Endothelial cell of umbilical vein (primary cell): ENCODE measurements at regions of chr17 and their contacts with region 1.

Region 1: GRCh38 chr17:28773736-28774135 is 29.9 kb downstream of the TRAF4 start:
- DNase-seq: no peak
- H3K4me3 ChIP-seq: no peak overlapping the region
- H3K27ac ChIP-seq: no peak overlapping the region
- H3K4me1 ChIP-seq: peaks cover 4% of the 10 kb centered on the region
- H3K27me3 ChIP-seq: no peaks in the 10 kb centered on the region
- CTCF ChIP-seq: no peak
- POLR2A ChIP-seq: no peak

Region 2: GRCh38 chr17:28612936-28613872 is 160.5 kb before region 1 on chr17:
- CTCF ChIA-PET with region 1: no interaction called
- POLR2A ChIA-PET with region 1: no interaction called
- dilution Hi-C with region 1: no loop called
- intact Hi-C with region 1: no loop called
- DNase-seq: peak; percentile 43
- H3K4me3 ChIP-seq: no peak overlapping the region
- H3K27ac ChIP-seq: no peak overlapping the region
- H3K4me1 ChIP-seq: peaks cover 7% of the 10 kb centered on the region
- H3K27me3 ChIP-seq: no peaks in the 10 kb centered on the region
- CTCF ChIP-seq: peak; percentile 56 to 79
- POLR2A ChIP-seq: peak; percentile 14

Region 3: DNA sequence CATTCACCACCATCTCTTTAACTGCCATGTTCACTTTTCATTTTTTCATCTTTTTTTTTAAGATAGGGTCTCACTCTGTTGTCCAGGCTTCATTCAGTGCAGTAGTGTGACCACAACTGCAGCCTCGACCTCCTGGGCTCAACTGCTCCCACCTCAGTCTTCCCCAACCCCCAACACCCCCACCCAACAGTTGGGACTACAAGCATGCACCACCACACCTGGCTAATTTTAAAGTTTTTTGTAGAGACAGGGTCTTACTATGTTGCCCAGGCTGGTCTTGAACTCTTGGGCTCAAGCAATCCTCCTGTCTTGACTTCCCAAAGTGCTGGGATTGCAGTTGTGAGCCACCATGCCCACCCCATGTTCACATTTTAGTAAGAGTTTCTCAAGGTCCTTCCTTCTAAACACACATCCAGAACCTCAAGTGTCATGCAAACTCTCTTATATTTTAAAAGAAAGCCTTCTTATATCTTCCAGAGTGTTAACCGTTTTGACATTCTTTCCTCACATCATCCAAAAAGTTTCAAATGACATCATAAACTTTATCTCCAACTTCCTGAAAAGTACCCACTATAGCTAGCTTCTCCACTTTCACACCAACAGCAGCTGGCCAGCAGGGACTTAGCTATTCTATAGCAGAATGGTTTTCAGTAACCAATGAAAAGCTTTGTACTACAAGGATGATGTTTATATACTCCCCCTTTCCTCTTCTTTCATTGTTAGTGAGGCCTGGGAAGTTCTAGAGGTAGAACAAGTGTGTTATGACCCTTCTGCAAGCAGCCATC is 19.3 kb after region 1 on chr17:
- CTCF ChIA-PET with region 1: interaction called, 12 read pairs
- POLR2A ChIA-PET with region 1: no interaction called
- dilution Hi-C with region 1: no loop called
- intact Hi-C with region 1: no loop called
- DNase-seq: peak; percentile 22
- H3K4me3 ChIP-seq: no peak overlapping the region
- H3K27ac ChIP-seq: no peak overlapping the region
- H3K4me1 ChIP-seq: peaks cover 3% of the 10 kb centered on the region
- H3K27me3 ChIP-seq: no peaks in the 10 kb centered on the region
- CTCF ChIP-seq: no peak
- POLR2A ChIP-seq: no peak

Region 4: DNA sequence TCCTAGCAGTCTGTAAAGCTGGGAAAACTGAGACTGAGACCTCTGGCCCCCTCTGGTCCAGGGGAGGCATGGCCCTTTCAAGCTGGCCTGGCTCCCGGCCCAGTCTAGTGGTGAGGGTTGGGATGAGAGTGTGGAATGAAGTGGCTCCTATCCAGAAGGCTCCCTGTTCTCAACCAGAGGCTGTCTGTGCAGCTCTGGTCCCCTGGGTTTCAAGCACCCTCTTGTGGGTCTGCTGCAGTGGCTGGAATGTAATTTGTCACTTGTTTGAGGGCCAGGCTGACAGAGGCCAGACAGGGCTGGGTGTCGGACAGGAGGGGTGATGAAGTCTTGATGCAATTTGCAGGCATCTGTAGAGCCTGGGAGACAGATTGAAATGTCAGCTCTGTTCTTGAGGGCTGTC is 199.7 kb after region 1 on chr17:
- CTCF ChIA-PET with region 1: no interaction called
- POLR2A ChIA-PET with region 1: no interaction called
- dilution Hi-C with region 1: no loop called
- intact Hi-C with region 1: no loop called
- DNase-seq: no peak
- H3K4me3 ChIP-seq: no peak overlapping the region
- H3K27ac ChIP-seq: no peak overlapping the region
- H3K4me1 ChIP-seq: no peaks in the 10 kb centered on the region
- H3K27me3 ChIP-seq: no peaks in the 10 kb centered on the region
- CTCF ChIP-seq: no peak
- POLR2A ChIP-seq: no peak